ENCODE measurements at regions of chr1 and their contacts with region 1.

Region 1: GRCh38 chr1:153566440-153567379 is 1.1 kb upstream of the S100A2 start:
- DNase-seq: peak; percentile 99
- ATAC-seq: peak; percentile 85
- H3K4me3 ChIP-seq: no peak overlapping the region
- H3K27ac ChIP-seq: peak overlapping the region; percentile 94
- H3K4me1 ChIP-seq: peaks cover 31% of the 10 kb centered on the region
- H3K27me3 ChIP-seq: no peaks in the 10 kb centered on the region
- CTCF ChIP-seq: no peak
- POLR2A ChIP-seq: peak; percentile 68
- RAD21 ChIP-seq: peak; percentile 35; the same call in 1 of the 2 replicates

Region 2: DNA sequence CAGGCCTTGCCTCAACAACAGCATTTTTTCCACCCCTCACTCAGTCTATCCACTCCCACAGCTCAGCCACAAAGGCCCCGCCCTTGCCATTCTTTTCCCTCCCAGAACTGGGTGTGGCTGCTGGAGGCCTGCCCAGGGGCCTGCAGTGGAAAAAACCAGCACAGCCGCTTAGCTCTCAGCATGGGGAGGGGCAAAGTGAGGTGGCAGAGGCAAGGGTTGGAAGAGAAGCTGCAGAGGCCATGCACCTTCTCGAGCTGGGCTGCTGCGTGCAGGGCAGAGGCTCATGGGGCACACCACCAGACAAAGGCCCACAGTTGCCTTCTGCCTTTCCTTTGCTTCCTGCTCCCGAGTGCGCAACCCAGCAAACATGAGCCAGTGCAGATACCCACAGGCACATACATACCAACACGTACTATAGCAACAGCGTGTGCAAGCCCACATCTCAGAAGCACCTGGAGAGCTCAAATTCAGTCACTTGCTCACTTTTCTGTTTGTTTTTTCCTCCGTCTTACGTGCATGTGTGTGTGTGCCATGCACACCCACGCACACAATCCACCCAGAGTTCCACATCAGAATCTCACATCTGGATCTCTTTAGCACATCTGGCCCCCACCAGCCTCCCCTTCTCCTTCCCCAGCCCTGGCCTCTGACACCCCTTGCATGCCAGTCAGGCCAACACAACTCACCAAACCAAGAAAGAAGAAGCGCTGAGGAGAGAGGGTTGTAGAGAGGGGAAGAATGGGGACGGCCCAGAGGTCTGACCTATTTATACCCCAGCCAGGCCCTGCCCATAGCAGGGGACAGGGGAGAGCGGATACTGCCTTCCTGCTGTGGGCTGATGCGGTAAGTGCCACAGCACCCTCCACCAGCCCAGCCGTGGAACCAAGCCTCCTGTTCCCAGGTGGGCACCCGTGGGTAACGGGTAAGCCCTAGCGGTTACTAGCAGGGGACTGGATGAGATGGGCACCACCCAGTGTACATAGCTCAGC is 21.3 kb before region 1 on chr1 and contains the start of gene S100A4:
- CTCF ChIA-PET with region 1: interaction called, 4 read pairs
- POLR2A ChIA-PET with region 1: interaction called, 5 read pairs
- dilution Hi-C with region 1: no loop called
- in situ Hi-C with region 1: no loop called
- intact Hi-C with region 1: loop called (anchors 2 kb)
- DNase-seq: peak; percentile 83
- ATAC-seq: peak; percentile 79
- H3K4me3 ChIP-seq: no peak within 1 kb of the TSS
- H3K27ac ChIP-seq: peak within 1 kb of the TSS; percentile 81
- H3K4me1 ChIP-seq: peaks cover 40% of the 10 kb centered on the region
- H3K27me3 ChIP-seq: no peaks in the 10 kb centered on the region
- CTCF ChIP-seq: no peak
- POLR2A ChIP-seq: no peak
- RAD21 ChIP-seq: no peak
- total RNA-seq, gene S100A4: 5.6 and 7.5 TPM in 2 replicates

Region 3: DNA sequence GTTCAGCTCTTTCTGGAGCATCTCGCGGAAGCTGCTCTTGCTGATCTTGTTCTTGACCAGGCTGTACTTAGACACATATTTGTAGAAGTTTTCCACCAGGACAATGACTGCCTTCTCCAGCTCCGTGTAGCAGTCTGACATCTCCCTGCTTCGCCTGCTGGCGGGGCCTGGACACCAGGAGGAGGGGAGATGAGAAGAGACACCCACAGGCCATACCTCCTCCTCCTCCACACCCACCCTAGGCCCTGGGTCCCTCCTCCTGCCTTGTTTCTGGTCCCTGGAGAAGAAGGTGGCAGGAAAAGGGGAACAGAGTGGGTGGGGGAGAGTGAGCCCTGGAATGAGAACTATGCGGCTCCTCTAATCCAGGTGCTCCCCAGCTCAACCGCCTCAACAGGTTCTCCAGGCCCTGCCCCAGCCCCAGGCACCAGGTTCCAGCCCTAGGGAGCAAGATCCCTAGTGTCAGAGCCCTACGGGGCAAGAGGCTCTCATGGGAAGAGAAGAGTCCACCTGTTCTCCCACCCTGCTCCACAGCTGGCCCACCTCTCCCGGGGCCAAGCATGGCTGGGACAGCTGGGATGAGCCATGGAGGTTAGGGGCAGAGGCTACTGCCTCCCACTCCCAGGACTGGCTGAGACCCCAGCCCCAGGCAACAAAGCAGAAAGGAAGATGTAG is 41.4 kb after region 1 on chr1:
- CTCF ChIA-PET with region 1: no interaction called
- POLR2A ChIA-PET with region 1: interaction called, 17 read pairs
- dilution Hi-C with region 1: no loop called
- in situ Hi-C with region 1: no loop called
- intact Hi-C with region 1: no loop called
- DNase-seq: no peak
- ATAC-seq: no peak
- H3K4me3 ChIP-seq: peak overlapping the region; percentile 43
- H3K27ac ChIP-seq: peak overlapping the region; percentile 85
- H3K4me1 ChIP-seq: peaks cover 38% of the 10 kb centered on the region
- H3K27me3 ChIP-seq: no peaks in the 10 kb centered on the region
- CTCF ChIP-seq: no peak
- POLR2A ChIP-seq: no peak
- RAD21 ChIP-seq: no peak

Region 4: GRCh38 chr1:153697191-153698019 is 130.7 kb after region 1 on chr1:
- CTCF ChIA-PET with region 1: no interaction called
- POLR2A ChIA-PET with region 1: no interaction called
- dilution Hi-C with region 1: no loop called
- in situ Hi-C with region 1: no loop called
- intact Hi-C with region 1: no loop called
- DNase-seq: no peak
- ATAC-seq: peak; percentile 53
- H3K4me3 ChIP-seq: no peak overlapping the region
- H3K27ac ChIP-seq: no peak overlapping the region
- H3K4me1 ChIP-seq: peaks cover 2% of the 10 kb centered on the region
- H3K27me3 ChIP-seq: peaks cover 5% of the 10 kb centered on the region; the same call in 1 of the 2 replicates
- CTCF ChIP-seq: no peak
- POLR2A ChIP-seq: no peak
- RAD21 ChIP-seq: no peak